Vagina (tissue), 2 donors: ENCODE measurements at regions of chr1 and their contacts with region 1.

Region 1: DNA sequence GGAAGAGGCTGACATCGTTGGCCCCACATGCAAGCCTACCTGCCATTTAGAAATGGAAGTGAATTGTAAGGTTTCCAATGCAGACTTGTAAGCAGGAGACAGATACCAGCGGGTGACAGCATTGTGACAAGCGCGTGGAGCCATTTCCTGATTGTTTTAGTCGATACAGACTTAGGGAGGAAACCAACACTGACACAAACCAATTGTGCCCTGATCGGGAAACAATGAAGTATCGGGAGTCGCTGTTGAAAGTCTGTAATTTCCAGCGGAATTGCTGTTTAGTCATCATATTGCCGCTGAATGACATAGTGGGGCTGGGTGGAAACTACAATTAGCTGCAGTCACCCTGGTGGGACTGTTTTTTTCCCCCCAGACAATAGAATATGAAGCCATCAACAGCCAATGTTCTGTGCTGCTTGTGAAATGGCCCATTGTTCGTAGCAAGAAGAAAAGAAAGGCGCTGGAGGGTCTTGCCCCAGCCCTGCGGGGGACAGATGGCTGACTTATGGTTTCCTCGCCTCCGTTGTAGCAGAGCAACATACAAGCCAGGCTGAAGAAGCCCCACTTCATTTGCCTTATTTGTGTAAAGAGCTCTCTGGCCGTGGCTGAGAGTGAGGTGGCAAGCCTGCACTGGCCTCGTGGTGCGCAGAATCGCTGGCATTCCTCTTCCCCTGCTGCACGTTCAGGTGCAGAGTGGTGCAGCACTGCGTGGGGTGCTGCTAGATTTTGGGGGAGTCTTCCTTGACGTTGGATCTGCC is 462.7 kb downstream of the CAMTA1 start:
- DNase-seq: peak; percentile 27 to 58
- H3K4me3 ChIP-seq: no peak overlapping the region
- H3K27ac ChIP-seq: no peak overlapping the region
- H3K4me1 ChIP-seq: no peaks in the 10 kb centered on the region
- H3K27me3 ChIP-seq: no peaks in the 10 kb centered on the region
- CTCF ChIP-seq: no peak
- POLR2A ChIP-seq: no peak

Region 2: GRCh38 chr1:7159116-7159781 is 88.7 kb before region 1 on chr1:
- intact Hi-C with region 1: loop called (anchors 5 kb)
- DNase-seq: no peak
- H3K4me3 ChIP-seq: no peak overlapping the region
- H3K27ac ChIP-seq: no peak overlapping the region
- H3K4me1 ChIP-seq: no peaks in the 10 kb centered on the region
- H3K27me3 ChIP-seq: no peaks in the 10 kb centered on the region
- CTCF ChIP-seq: no peak
- POLR2A ChIP-seq: no peak